ENCODE measurements at regions of chrX and their contacts with region 1.

Region 1: GRCh38 chrX:106249706-106250379 is 81.7 kb downstream of the PWWP3B start:
- DNase-seq: no peak
- ATAC-seq: no peak
- H3K4me3 ChIP-seq: no peak overlapping the region
- H3K27ac ChIP-seq: no peak overlapping the region
- H3K4me1 ChIP-seq: no peaks in the 10 kb centered on the region
- H3K27me3 ChIP-seq: no peaks in the 10 kb centered on the region

Region 2: GRCh38 chrX:106302242-106302662 is 52.4 kb after region 1 on chrX:
- intact Hi-C with region 1: loop called in 1 of 2 experiments (anchors 10 kb)
- DNase-seq: no peak
- ATAC-seq: no peak
- H3K4me3 ChIP-seq: no peak overlapping the region
- H3K27ac ChIP-seq: no peak overlapping the region
- H3K4me1 ChIP-seq: no peaks in the 10 kb centered on the region
- H3K27me3 ChIP-seq: no peaks in the 10 kb centered on the region

Region 3: DNA sequence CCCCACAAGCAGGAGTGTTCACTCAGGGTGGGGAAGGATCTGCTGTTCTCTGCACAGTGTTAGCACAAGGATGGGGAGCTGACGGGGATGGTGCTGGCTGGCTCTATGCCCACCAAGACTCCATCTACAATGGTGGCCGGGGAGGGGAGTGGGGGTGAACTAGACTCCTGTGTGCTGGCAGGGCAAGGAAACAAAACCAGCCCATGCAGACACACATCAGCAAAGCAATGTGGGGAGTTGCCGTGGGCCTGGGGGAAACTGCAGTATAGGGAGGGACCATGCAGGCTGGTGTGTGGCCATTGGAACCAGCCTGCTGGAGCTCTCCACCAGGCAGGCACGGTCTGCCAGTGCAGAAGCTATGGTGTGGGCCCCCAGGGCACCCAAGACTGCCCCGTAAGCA is 113.4 kb after region 1 on chrX:
- intact Hi-C with region 1: no loop called
- DNase-seq: no peak
- ATAC-seq: no peak
- H3K4me3 ChIP-seq: no peak overlapping the region
- H3K27ac ChIP-seq: no peak overlapping the region
- H3K4me1 ChIP-seq: no peaks in the 10 kb centered on the region
- H3K27me3 ChIP-seq: no peaks in the 10 kb centered on the region